Tibial artery (tissue), 4 donors: ENCODE measurements at regions of chrX and their contacts with region 1.

Region 1: DNA sequence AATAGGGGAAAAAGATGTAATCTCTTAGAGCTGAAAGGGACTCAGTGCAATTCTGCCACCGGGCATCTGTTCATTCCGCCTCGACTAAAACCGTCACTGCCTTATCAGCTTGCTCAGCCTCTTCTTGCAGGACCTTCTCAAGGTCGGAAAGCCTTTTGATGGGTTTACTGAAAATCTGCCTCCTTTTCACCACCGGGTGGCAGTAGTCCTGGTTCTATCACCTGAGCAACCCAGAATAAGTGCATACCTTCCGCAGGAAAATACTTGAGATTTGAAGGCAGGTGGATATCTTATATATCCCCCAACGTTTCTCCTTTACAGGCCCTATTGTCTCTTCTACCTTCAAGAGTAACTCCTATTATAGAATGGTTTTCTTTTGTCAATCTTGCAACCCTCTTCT is 103.4 kb upstream of the PAK3 start:
- DNase-seq: no peak
- H3K4me3 ChIP-seq: no peak overlapping the region
- H3K27ac ChIP-seq: no peak overlapping the region
- H3K4me1 ChIP-seq: no peaks in the 10 kb centered on the region
- H3K27me3 ChIP-seq: no peaks in the 10 kb centered on the region
- CTCF ChIP-seq: peak in 1 of 2 experiments; percentile 15

Region 2: GRCh38 chrX:109862433-109862832 is 1130.2 kb before region 1 on chrX:
- intact Hi-C with region 1: no loop called
- DNase-seq: no peak
- H3K4me3 ChIP-seq: no peak overlapping the region
- H3K27ac ChIP-seq: no peak overlapping the region
- H3K4me1 ChIP-seq: no peaks in the 10 kb centered on the region
- H3K27me3 ChIP-seq: no peaks in the 10 kb centered on the region
- CTCF ChIP-seq: no peak

Region 3: GRCh38 chrX:111244235-111244750 is 251.7 kb after region 1 on chrX:
- intact Hi-C with region 1: loop called (anchors 10 kb)
- DNase-seq: no peak
- H3K4me3 ChIP-seq: no peak overlapping the region
- H3K27ac ChIP-seq: no peak overlapping the region
- H3K4me1 ChIP-seq: no peaks in the 10 kb centered on the region
- H3K27me3 ChIP-seq: no peaks in the 10 kb centered on the region
- CTCF ChIP-seq: peak; percentile 42 to 49